Psoas muscle (tissue), 8 donors: ENCODE measurements at regions of chr7 and their contacts with region 1.

Region 1: GRCh38 chr7:70098133-70098561 is 499.9 kb downstream of the AUTS2 start:
- DNase-seq: no peak
- ATAC-seq: no peak
- H3K4me3 ChIP-seq: no peak overlapping the region
- H3K27ac ChIP-seq: no peak overlapping the region
- H3K4me1 ChIP-seq: peaks cover 19% of the 10 kb centered on the region
- H3K27me3 ChIP-seq: no peaks in the 10 kb centered on the region
- CTCF ChIP-seq: no peak

Region 2: GRCh38 chr7:69953136-69954067 is 144.7 kb before region 1 on chr7:
- intact Hi-C with region 1: no loop called
- DNase-seq: no peak
- ATAC-seq: no peak
- H3K4me3 ChIP-seq: no peak overlapping the region
- H3K27ac ChIP-seq: no peak overlapping the region
- H3K4me1 ChIP-seq: peaks cover 6% of the 10 kb centered on the region
- H3K27me3 ChIP-seq: no peaks in the 10 kb centered on the region
- CTCF ChIP-seq: no peak

Region 3: DNA sequence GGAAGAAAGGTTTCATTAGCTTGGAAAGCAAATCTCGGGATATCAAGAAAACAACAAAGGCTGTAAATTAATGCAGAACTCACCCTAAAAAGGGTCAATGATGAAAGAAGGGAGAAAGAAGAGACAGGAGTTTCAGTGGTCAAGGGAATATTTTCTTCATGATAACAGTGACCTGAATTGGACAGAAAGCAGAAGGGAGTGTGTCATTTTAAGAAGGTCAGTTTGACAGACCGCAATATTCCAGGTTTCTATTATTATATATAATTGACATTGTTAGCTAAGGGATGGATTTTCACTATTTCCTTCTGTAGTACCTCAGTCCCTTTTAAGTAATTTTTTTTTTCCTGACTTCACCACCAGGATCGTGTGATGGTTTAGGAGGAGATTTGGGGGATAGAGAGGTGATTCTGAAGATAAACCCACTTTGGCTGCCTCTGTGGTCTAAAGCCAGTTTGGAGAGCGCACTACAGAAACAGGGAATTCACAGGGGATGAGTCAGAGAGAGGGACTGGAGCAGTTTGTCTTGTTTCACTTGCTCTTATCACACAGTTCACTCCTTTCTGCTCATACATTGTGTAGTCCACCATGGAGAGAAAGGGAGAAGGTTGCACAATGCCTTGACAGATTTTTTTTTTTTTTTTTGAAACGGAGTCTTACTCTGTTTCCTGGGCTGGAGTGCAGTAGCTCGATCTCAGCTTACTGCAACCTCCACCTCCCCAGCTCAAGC is 81.9 kb before region 1 on chr7:
- intact Hi-C with region 1: no loop called
- DNase-seq: no peak
- ATAC-seq: no peak
- H3K4me3 ChIP-seq: no peak overlapping the region
- H3K27ac ChIP-seq: no peak overlapping the region
- H3K4me1 ChIP-seq: no peaks in the 10 kb centered on the region
- H3K27me3 ChIP-seq: no peaks in the 10 kb centered on the region
- CTCF ChIP-seq: no peak

Region 4: DNA sequence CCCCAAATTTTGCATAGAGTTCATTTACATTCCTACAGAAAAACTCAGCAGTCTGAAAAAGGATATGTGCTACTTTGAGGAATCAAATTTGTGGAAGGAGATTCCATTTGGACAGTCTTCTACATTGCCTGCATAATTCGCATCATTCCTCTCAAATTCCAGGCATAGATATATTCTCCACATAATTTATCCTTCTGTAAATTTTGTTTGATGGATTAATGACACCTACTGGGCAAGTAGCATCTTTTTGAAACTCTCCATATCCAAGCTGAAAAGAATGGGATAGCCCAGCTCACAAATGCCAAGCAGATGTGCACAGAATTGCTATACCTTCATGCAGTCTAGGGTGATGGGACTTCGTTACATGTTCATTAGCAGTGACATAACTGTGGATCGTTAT is 15.4 kb after region 1 on chr7:
- intact Hi-C with region 1: no loop called
- DNase-seq: no peak
- ATAC-seq: no peak
- H3K4me3 ChIP-seq: no peak overlapping the region
- H3K27ac ChIP-seq: no peak overlapping the region
- H3K4me1 ChIP-seq: no peaks in the 10 kb centered on the region
- H3K27me3 ChIP-seq: no peaks in the 10 kb centered on the region
- CTCF ChIP-seq: no peak

Region 5: DNA sequence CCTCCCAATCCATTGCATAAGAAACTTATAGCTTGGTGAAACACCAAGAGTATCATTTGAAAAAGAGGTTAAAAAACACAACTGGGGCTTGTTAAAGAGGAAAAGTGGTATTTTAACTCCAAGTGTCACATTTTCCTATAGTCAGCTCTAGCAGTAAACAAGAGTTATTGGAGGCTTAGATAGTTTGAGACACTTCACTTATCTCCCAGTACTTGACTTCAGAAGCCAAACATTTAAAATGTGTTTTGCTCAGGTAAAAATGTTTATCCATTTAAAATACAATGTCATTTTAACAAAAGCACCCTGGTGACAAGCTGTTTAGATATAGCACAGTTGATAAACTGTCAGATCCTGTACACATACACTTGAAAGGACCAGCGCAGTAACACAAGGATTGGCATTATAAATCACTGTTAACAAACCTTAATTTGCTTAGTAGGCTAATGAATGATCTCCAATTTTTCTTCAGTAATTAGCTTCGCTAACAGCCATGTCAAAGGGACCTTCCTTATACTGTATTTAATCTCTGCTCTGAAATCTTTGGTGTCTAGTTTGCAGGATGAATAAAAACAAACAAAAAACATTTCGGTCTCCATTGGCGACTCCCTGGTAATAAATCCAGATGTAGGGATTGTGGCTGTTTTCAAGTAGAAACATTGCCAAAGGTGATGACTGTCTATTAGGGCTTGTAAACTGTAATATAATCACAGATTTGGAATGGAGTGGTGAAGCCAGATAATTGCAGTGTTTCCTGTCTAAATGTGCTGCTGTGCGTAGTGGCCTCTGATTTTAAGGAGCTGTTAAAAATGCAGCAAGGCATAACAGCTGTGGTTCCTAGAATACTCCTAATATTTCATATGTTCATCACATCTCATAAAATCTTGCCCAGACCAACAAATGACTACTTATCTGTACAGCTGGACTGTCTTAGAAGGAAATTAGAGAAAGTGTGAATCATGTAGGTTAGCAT is 45.2 kb after region 1 on chr7:
- intact Hi-C with region 1: loop called in 1 of 2 experiments (anchors 5 kb)
- DNase-seq: no peak
- ATAC-seq: peak in 2 of 4 donors; percentile 19 to 34
- H3K4me3 ChIP-seq: no peak overlapping the region
- H3K27ac ChIP-seq: no peak overlapping the region
- H3K4me1 ChIP-seq: peaks cover 9% of the 10 kb centered on the region
- H3K27me3 ChIP-seq: no peaks in the 10 kb centered on the region
- CTCF ChIP-seq: no peak